SK-N-SH (cell line): ENCODE measurements at regions of chrX and their contacts with region 1.

Region 1: DNA sequence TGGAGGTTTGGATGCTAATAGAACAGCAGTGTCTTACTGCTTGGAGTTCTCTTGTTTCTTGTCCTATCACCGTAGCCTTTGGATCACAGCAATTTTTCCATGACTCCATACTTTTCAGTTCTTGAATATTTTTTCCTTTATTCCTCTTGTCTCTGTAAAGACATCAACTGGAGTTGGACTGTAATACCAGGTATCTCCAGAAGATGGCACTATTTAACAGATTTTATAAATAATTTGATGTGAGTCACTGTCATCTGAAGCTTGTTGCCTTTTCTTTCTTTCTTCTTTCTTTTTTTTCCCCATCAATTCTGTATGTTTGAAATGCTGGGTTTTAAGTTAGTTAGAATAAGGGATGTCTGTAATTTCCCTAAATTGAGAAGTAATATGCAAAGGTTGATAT is 24.1 kb downstream of the HPRT1 start:
- DNase-seq: peak; percentile 18
- H3K4me3 ChIP-seq: no peak overlapping the region
- H3K27ac ChIP-seq: peak overlapping the region in 1 of 2 experiments; percentile 28; a peak in 1 of 4 replicates
- H3K4me1 ChIP-seq: no peaks in the 10 kb centered on the region; a peak in 1 of 4 replicates
- H3K27me3 ChIP-seq: no peaks in the 10 kb centered on the region
- CTCF ChIP-seq: peak; percentile 80
- EP300 ChIP-seq: no peak
- RAD21 ChIP-seq: peak; percentile 71

Region 2: DNA sequence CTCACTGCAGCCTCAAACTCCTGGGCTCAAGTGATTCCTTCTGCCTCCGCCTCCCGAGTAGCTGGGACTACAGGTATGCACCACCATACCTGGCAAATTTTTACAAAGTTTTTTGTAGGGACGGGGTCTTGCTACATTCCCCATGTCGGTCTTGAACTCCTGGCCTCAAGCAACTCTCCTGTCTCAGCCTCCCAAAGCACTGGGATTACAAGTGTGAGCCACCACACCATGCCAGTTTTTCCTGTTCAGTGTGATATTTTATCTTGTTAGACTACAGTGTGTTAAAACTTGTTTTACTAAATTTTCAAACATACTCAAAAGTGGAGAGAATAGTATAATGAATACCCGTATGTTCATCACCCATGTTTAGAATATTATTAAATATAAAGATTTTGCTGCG is 12.0 kb before region 1 on chrX:
- CTCF ChIA-PET with region 1: interaction called, 16 read pairs
- POLR2A ChIA-PET with region 1: no interaction called
- DNase-seq: no peak
- H3K4me3 ChIP-seq: no peak overlapping the region
- H3K27ac ChIP-seq: no peak overlapping the region
- H3K4me1 ChIP-seq: 0 out of 4 replicates have a peak, but pooled peaks cover 0 to 5% of the 10 kb centered on the region in 2 experiments
- H3K27me3 ChIP-seq: no peaks in the 10 kb centered on the region; the same call in 1 of the 2 replicates
- CTCF ChIP-seq: no peak
- EP300 ChIP-seq: no peak
- RAD21 ChIP-seq: no peak

Region 3: DNA sequence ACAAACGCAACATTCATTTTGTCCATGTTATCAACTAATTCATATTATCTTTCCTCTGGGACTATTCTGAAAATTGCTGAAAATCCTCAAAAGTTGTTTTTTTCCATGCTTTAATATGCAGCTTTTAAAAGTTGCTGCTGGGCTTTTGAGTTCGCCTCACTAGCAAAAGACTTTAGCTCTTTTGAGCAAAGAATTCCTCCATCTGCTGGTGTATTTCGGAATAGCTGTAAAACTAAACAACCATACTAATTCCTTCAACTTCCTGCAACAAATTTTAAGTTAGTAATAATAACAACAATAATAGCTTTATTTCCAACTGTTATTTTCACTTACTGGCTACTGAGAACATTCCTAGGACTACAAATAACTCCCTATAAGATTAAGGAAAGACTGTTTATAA is 298.8 kb after region 1 on chrX:
- CTCF ChIA-PET with region 1: interaction called, 21 read pairs
- POLR2A ChIA-PET with region 1: no interaction called
- DNase-seq: peak; percentile 23
- H3K4me3 ChIP-seq: no peak overlapping the region
- H3K27ac ChIP-seq: no peak overlapping the region; a peak in 1 of 4 replicates
- H3K4me1 ChIP-seq: no peaks in the 10 kb centered on the region
- H3K27me3 ChIP-seq: no peaks in the 10 kb centered on the region
- CTCF ChIP-seq: peak; percentile 82
- EP300 ChIP-seq: no peak
- RAD21 ChIP-seq: peak; percentile 73

Region 4: GRCh38 chrX:135382260-135382659 is 898.2 kb after region 1 on chrX:
- CTCF ChIA-PET with region 1: no interaction called
- POLR2A ChIA-PET with region 1: no interaction called
- DNase-seq: no peak
- H3K4me3 ChIP-seq: no peak overlapping the region
- H3K27ac ChIP-seq: no peak overlapping the region
- H3K4me1 ChIP-seq: no peaks in the 10 kb centered on the region
- H3K27me3 ChIP-seq: no peaks in the 10 kb centered on the region
- CTCF ChIP-seq: no peak
- EP300 ChIP-seq: no peak
- RAD21 ChIP-seq: no peak